Posterior vena cava (tissue), 2 donors: ENCODE measurements at regions of chr12 and their contacts with region 1.

Region 1: DNA sequence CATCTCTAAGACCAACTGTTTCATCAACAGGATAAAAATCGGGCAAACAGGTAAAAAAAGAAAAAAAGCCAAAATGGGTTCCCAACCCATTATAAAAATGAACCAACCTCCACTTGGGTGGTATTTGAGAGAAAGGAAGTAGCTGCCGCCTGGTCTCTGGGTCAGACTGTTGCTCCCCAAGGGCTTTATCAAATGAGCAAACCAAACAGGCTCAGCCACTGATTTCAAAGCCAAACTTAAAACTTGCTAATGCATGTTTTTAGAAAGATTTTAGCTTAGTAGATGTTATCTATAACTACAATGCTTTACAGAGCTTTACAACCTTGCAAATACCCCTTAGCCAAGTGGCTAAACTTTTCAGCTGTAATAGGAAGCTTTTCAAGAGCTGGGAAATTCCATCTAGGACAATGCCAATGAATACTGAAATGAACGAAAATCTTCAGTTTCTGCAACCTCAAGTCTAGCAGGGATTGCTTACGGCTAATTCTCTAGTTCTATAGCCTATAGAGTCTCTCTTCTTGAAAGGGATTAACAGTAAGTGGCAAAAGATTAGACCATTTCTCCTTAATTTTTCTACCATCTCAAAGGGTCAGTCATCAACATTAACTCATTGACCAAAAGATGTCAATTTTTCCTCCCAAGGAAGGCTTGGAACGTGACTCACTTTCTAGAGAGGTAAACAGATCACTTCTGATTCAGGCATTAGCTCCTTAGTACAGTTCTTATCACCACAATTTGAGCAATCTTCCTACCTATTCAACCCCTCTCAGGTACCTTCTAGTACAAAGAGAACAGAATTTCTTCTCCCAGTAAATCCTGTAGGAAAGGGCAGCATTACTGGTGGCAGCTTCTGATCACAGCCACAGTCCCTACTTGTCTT is 4.2 kb downstream of the PPM1H start:
- DNase-seq: no peak

Region 2: DNA sequence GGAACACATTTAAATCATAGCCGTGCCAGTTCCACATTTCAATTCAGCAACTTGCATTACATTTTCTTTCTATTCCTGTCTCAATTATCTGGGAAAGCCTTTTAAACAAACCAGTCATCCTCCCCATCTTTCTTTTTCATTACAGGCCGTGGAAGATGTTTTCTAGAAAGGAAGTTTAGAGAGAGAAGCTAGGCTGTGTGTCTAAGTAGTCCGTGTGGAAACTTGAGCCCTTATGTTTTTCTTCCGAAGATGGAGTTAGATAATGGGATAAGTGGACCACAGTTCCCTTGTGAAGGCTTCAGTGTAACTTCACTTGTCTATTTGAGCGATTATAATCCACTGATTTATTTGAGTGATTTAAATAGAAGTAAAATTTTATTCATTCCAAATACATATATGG is 16.6 kb after region 1 on chr12:
- intact Hi-C with region 1: no loop called
- DNase-seq: no peak

Region 3: GRCh38 chr12:62995097-62995496 is 64.3 kb after region 1 on chr12:
- intact Hi-C with region 1: loop called in 1 of 2 experiments (anchors 2 kb)
- DNase-seq: no peak

Region 4: GRCh38 chr12:63006536-63006935 is 75.8 kb after region 1 on chr12:
- intact Hi-C with region 1: no loop called
- DNase-seq: no peak